Pancreas (tissue), 10 donors: ENCODE measurements at regions of chr20 and their contacts with region 1.

Region 1: GRCh38 chr20:10673988-10674711 is at the start of gene JAG1:
- DNase-seq: peak; percentile 96 to 100 (median 98)
- ATAC-seq: peak; percentile 73 to 84 (median 78)
- H3K4me3 ChIP-seq: peak within 1 kb of the TSS; percentile 59 to 99 (median 88)
- H3K27ac ChIP-seq: peak within 1 kb of the TSS; percentile 99 to 100 (median 100)
- H3K4me1 ChIP-seq: peaks cover 1 to 13% (median 4%) of the 10 kb centered on the region in 3 donors
- H3K27me3 ChIP-seq: no peaks in the 10 kb centered on the region
- CTCF ChIP-seq: no peak
- total RNA-seq, gene JAG1: 22.6 to 60.1 (median 27.4) TPM

Region 2: DNA sequence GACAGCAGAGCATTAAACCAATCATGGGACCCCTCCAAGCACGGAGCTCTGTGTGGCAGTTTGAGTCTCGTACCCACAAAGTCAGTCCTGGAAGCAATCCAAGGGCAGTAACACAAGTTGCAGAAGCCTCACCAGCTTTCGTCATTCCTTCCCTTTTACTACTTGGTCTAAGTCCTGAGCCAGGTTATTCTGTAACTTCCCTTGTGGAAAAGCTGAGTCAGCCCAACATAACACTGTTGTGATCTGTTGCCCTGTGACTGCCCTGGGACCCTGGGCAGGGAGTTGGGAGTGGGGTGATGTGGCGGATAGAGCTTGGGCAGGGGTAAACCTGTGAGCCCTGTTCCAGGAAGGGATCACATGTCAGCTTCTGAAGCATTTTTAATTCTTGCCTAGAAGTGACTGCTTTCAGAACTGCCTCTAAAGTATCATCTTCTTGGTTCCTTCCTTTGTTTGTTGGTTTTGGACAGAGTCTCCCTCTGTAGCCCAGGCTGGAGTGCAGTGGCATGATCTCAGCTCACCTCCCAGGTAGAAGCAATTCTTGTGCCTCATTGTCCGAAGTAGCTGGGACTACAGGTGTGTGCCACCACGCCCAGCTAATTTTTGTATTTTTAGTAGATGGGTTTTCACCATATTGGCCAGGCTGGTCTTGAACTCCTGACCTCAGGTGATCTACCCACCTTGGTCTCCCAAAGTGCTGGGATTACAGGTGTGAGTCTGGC is 183.4 kb after region 1 on chr20:
- intact Hi-C with region 1: no loop called
- DNase-seq: peak in 2 of 6 donors; percentile 29 to 67
- ATAC-seq: peak; percentile 75 to 92 (median 82)
- H3K4me3 ChIP-seq: no peak overlapping the region
- H3K27ac ChIP-seq: peak overlapping the region in 2 of 4 donors; percentile 25 to 55
- H3K4me1 ChIP-seq: peaks cover 13 to 20% (median 14%) of the 10 kb centered on the region in 3 donors
- H3K27me3 ChIP-seq: no peaks in the 10 kb centered on the region
- CTCF ChIP-seq: no peak

Region 3: GRCh38 chr20:11216451-11217314 is 542.5 kb after region 1 on chr20:
- intact Hi-C with region 1: loop called in 1 of 3 experiments (anchors 10 kb)
- DNase-seq: no peak
- ATAC-seq: peak; percentile 46 to 69 (median 64)
- H3K4me3 ChIP-seq: no peak overlapping the region
- H3K27ac ChIP-seq: peak overlapping the region in 2 of 4 donors; percentile 45 to 48
- H3K4me1 ChIP-seq: peaks cover 3 to 21% (median 14%) of the 10 kb centered on the region in 3 donors
- H3K27me3 ChIP-seq: no peaks in the 10 kb centered on the region
- CTCF ChIP-seq: no peak

Region 4: DNA sequence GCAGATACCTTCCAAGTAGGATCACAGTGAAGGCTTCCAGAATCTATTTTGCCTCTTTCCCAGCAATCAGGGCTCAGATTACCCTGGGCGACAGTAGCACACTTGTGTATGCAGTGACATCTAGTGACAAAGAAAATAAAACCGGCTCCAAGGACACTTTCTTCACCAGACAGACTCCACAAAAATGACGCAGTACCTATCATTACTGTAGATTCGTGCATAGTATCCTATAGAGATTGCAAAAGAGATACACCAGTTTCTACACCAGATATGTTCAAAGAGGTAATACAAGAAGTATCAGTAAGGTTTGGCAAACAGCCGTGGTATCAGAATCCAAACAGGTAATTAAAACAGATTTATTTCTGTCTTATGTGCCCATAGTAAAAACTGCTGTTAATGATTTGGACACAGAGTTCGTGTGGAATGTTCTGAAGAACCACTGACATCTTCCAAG is 600.0 kb after region 1 on chr20:
- intact Hi-C with region 1: loop called in 1 of 3 experiments (anchors 10 kb)
- DNase-seq: peak in 2 of 6 donors; percentile 23 to 43
- ATAC-seq: peak; percentile 91 to 98 (median 96)
- H3K4me3 ChIP-seq: no peak overlapping the region
- H3K27ac ChIP-seq: no peak overlapping the region
- H3K4me1 ChIP-seq: no peaks in the 10 kb centered on the region
- H3K27me3 ChIP-seq: no peaks in the 10 kb centered on the region
- CTCF ChIP-seq: peak; percentile 7 to 41 (median 26)